Endothelial cell of umbilical vein (primary cell): ENCODE measurements at regions of chr5 and their contacts with region 1.

Region 1: DNA sequence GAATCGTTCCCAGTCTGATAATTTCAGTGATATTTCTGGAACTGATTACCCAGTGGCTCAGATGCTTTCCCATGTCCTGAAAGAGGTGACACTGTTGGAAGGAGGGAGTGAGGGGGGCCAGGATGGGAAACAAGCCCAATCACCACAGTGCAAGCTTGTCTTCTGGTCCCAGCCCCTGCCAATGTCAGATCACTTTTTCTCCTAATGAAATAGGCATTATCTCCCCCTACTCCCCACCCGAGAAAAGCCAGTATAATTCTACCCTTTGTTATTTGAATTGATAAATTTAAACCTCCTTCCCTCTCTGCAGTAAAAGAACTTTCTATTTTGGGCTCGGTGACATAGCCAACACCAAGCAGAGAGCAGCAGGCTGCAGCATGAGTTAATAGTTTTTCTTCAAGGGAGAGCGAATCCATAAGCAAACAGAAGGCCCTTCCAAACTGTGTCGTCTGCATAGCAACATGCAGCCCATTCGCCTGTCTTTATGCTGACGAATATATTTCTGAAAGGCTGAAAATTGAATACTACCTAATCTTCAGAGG is 14.6 kb upstream of the PPP2CA start:
- DNase-seq: no peak
- H3K4me3 ChIP-seq: no peak overlapping the region
- H3K27ac ChIP-seq: no peak overlapping the region
- H3K4me1 ChIP-seq: no peaks in the 10 kb centered on the region
- H3K27me3 ChIP-seq: peaks cover 5 to 12% of the 10 kb centered on the region in 2 experiments
- CTCF ChIP-seq: no peak
- POLR2A ChIP-seq: no peak

Region 2: GRCh38 chr5:134275822-134276221 is 35.3 kb after region 1 on chr5:
- CTCF ChIA-PET with region 1: interaction called, 3 read pairs
- POLR2A ChIA-PET with region 1: no interaction called
- dilution Hi-C with region 1: no loop called
- intact Hi-C with region 1: loop called (anchors 5 kb)
- DNase-seq: no peak
- H3K4me3 ChIP-seq: no peak overlapping the region
- H3K27ac ChIP-seq: no peak overlapping the region
- H3K4me1 ChIP-seq: no peaks in the 10 kb centered on the region
- H3K27me3 ChIP-seq: peaks cover 19 to 26% of the 10 kb centered on the region in 2 experiments
- CTCF ChIP-seq: no peak
- POLR2A ChIP-seq: no peak